Posterior cingulate gyrus (tissue), 11 donors: ENCODE measurements at regions of chr5 and their contacts with region 1.

Region 1: DNA sequence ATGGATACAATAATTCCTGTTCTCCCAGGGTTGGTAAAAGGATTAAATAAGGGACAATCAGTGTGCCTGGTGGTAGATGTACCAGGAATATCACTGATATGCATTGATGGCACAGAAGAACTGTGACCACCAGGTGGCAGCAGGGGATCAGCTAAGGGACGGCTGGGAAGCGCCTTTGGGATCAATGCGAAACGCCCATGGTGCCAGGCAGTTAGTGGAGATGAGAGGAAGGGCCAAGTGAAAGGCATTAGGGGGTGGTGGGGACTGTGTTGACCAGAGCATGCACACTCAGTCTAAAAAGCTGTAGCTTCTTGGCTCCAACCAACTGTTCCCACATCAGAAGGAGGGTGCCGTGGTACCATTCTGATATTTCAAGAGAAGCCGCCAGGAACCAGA is 55.6 kb downstream of the ARHGEF37 start:
- DNase-seq: peak in 7 of 10 donors; percentile 55 to 98 (median 84)

Region 2: DNA sequence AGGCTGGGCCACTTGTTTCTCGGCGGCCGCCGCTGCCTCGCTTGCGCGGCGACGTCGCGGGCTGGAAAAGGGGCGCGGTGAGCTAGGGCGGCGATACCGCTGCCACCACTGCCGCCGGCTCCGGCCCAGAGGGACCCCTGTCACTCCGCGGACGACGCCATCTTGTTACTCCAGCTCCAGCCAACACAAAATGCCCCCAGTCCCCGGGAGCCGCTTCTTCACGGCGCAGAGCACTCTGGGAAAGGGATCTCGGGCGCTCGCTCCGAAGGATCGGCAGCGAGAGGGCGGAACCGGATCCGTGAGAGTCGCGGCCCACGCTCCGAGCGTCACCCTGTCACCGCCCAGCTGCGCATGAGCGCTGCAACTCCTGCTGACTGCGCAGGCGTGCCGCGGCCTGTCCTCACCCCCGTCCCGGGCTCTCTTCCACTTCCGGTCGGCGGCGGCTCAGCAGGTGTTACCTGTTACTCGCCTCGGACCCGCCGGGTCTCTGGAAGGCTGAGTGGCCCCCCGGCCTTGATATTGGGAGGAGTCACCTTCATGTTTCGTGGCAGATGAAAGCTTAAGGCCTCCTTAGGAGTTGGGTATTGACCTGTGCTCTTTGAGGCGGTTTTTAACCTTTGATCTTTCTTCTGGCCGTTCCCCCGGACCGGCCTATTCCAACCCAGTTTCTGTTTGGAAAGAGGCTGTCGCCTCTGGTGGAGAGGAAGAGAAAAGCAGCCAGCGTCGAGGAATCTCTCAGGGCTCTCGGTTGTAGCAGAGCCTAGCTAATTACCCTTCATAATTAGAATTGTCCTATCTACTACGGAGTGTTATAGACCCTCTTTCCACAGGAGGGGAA is 85.4 kb before region 1 on chr5 and contains the start of gene CSNK1A1:
- intact Hi-C with region 1: no loop called
- DNase-seq: peak; percentile 94 to 99 (median 96)

Region 3: GRCh38 chr5:149828161-149828884 is 191.5 kb after region 1 on chr5:
- intact Hi-C with region 1: loop called (anchors 1 kb)
- DNase-seq: peak; percentile 58 to 95 (median 86)

Region 4: DNA sequence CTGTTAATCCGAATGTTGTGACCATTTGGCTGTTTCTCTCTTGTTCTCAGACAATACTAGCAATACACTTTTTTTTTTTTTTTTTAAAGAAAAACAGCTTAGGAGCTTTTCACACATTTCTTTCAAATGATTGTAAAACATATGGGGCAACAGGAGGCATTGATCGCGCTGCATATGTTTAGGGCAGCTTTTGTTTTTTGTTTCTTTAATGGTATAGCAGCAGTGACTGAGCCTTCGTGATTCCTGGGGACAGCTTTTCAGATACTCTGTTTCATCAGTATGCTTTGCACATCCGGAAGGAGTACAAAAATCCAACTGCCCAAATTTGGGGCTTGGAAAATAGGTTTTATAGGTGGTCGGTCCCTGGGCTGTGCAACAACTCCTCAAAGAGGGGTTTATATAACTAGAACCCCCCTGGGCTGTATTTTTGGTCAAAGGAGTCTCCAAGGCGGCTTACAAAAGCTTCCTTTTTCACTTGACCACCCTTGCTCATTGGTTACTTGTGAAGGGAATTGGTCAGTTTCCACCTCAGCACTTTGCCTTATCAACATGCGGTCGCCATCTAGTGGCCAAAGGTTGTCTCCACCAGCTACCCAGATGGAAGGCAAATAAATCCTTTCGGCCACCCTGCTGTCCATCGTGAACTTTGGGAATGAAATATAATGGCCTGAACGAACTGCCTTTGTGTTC is 215.9 kb after region 1 on chr5:
- intact Hi-C with region 1: no loop called
- DNase-seq: peak; percentile 41 to 92 (median 72)

Region 5: DNA sequence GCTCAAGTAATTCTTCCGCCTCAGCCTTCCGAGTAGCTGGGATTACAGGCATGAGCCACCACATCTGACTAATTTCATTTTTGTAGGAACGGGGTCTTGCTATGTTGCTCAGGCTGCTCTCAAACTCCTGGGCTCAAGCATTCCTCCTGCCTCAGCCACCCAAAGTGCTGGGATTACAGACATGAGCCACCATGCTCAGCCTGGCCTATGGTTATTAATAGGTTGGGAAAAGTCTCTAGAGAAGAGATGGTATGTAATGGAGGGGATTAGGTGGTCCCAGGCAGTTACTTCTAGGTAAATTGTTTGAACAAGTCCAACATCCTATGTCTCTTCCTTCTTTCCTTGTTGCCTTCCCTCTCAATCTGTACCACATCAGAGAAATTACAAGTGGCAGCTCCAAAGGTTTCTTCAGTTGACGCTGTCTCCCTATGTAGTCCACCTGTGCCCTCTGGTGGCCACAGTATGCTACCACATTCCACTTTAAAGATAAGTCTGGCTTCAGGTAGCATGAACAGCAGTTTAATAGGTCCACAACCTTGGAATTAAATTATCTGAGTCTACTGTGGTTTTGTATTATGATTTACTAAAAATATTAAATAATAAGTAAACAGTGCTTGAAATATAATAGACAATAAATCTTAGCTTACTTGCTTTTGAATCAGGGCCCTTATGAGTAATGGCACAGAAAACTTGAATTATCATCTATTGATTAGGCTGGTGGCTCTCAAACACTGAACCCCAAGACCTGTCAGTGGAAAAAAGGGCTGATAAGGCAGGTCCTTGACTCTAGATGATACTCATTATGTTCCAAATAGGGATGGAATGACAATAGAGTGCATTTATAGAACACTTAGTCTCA is 353.9 kb after region 1 on chr5:
- intact Hi-C with region 1: loop called (anchors 5 kb)
- DNase-seq: peak in 7 of 10 donors; percentile 37 to 91 (median 66)